Activated CD4-positive, alpha-beta T cell treated with anti-CD3 and anti-CD28 coated beads, Interleukin-2, amount 10 ng/mL, durations not matched to agents 7 days and 5 days (primary cell): ENCODE measurements at regions of chr17 and their contacts with region 1.

Region 1: DNA sequence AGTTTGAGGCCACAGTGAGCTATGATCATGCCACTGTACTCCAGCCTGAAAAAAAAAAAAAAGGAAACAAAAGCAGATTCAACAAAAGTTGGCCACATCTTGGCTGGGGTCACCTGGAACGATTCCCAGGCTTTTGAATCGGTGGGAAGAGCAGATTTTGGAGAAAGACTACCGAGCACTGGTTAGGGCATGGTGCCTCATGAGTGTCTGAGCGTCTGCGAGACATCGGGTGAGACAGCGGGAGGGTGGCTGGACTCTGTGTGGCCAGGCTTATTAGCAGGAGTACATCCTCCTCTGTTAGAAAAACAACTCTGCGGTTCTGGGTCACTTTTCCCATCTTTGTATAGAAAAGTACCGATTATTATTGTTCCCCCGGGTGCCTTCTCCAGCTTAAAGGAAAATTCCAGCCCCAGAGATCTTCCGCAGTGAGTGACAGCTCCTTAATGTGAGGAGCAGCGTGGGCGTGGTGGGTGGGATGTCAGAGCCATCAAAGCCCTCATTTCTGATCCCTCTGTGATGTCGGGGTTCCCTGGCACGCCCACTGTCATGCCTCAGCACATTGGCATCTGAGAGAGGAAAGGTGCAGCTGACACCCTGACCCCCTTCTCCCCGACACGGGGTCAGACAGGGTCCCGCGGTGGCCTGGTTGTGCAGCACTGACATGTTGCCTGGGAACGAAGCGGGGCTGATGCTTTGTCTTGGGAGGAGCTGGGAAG is 6.9 kb downstream of the RGS9 start:
- DNase-seq: no peak
- H3K4me3 Mint-ChIP-seq: no peak overlapping the region
- H3K27ac Mint-ChIP-seq: no peak overlapping the region
- H3K4me1 Mint-ChIP-seq: peaks cover 10% of the 10 kb centered on the region
- H3K27me3 Mint-ChIP-seq: peaks cover 15% of the 10 kb centered on the region

Region 2: DNA sequence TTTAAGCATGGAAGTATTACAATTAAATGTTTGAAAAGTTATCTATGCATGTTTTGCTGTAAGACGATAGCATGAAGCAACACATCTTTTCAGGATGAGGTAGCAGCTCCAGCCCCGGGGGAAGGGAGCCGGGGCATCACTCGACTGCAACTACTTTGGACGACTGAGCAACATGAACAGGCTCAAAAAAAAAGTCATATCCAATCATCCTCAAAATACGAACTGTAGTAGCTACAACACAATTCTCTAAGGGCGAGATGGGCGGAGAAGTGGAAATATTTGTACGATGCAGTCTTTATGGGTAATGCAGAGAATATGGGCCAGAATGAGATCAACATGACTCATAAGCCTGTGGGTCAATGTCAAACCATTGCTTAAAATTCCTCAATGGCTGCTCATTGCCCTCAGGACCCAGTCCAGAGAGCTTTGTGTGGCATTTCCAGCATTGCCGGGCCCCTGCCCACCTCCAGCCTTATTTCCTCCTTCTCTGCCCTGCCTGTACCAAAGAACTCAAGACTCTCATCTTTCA is 464.3 kb before region 1 on chr17:
- CTCF ChIA-PET with region 1: no interaction called
- POLR2A ChIA-PET with region 1: interaction called, 10 read pairs
- DNase-seq: no peak
- H3K4me3 Mint-ChIP-seq: no peak overlapping the region
- H3K27ac Mint-ChIP-seq: no peak overlapping the region
- H3K4me1 Mint-ChIP-seq: peaks cover 1% of the 10 kb centered on the region
- H3K27me3 Mint-ChIP-seq: no peaks in the 10 kb centered on the region

Region 3: DNA sequence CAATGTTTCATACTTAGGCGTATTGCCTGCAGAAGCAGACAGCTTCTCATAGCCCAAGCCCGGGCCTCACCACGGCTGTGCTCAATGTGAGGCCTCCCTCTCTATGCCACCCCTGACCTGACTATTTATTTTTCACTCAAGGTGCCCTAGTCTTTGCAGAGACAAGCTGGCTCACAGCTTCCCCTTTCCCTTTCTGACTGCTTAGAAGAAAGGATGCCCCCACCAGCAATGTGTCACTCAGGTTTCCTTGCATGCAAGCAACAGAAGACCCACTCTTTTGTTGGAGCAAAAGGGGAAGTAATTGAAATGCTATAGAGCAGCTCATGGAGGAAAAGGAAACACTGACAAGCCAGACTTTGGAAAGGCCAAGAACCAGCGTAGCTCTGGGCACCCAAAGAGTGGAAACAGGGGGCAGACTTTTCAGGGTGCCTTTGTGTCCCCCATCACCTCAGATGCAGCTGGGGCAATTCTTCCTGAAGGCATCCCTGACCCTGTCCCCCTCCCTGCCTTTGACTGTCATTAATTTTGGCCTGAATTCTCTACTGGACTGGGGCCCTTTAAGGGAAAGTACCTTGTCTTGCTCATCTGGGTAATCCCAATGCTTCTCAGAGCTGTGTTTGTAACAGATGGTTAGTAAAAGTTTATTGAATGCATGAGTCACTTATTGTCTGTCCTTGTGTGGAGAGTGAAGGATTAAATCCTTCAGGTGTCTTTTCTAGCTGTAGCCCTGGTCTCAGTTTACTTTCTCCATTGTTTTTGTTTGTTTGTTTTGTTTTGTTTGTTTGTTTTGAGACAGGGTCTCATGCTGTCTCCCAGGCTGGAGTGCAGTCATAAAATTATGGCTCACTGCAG is 10.9 kb after region 1 on chr17:
- CTCF ChIA-PET with region 1: interaction called, 21 read pairs
- POLR2A ChIA-PET with region 1: no interaction called
- DNase-seq: no peak
- H3K4me3 Mint-ChIP-seq: no peak overlapping the region
- H3K27ac Mint-ChIP-seq: no peak overlapping the region
- H3K4me1 Mint-ChIP-seq: peaks cover 7% of the 10 kb centered on the region
- H3K27me3 Mint-ChIP-seq: peaks cover 4% of the 10 kb centered on the region